Heart right ventricle (tissue), 16 donors: ENCODE measurements at regions of chr3 and their contacts with region 1.

Region 1: DNA sequence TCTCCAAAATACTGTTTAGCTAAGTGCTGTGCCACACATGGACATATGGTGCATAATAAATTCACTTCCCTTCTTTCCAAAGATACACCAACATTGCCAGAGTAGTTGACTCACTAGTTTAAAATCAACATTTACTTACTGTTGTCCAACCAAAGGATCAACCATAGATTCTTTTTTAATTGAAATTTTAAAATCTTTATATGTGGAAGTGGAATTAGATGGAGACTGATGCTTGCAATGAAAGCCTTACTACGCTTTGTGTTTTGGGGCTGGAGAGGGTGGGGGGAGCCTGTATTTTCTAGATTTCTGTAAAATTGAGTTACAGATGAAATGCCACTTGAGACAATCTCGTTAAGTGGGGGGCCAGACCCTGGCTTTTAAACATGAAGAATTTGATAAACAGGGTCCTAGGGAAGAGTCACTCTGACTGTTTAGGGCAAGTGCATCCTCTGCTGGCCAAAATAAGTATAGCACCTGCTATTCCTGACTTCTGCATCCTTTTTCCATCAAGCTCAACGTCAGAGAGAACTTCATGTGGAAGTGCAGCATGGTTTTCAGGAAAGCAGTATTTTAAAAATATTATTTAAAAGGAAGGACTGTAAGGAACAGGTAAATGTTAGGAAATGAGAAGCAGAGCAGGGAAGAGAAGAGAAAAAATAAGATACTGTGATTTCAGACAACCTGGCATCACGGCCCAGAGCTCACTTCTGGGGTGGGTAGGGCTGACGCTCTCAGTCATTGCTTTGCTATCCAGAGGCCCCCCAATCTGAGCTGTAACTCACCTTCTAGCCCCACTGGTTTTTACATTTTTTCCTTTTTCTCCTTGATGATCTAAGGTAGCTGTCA is 76.7 kb downstream of the BOC start:
- DNase-seq: peak in 1 of 2 donors; percentile 70
- ATAC-seq: peak in 7 of 8 donors; percentile 44 to 60 (median 55)
- H3K4me3 ChIP-seq: no peak overlapping the region
- H3K27ac ChIP-seq: peak overlapping the region in 1 of 10 donors; percentile 46
- H3K4me1 ChIP-seq: peaks cover 0 to 6% (median 0%) of the 10 kb centered on the region in 9 donors
- H3K27me3 ChIP-seq: no peaks in the 10 kb centered on the region
- CTCF ChIP-seq: peak; percentile 92 to 100 (median 97)

Region 2: DNA sequence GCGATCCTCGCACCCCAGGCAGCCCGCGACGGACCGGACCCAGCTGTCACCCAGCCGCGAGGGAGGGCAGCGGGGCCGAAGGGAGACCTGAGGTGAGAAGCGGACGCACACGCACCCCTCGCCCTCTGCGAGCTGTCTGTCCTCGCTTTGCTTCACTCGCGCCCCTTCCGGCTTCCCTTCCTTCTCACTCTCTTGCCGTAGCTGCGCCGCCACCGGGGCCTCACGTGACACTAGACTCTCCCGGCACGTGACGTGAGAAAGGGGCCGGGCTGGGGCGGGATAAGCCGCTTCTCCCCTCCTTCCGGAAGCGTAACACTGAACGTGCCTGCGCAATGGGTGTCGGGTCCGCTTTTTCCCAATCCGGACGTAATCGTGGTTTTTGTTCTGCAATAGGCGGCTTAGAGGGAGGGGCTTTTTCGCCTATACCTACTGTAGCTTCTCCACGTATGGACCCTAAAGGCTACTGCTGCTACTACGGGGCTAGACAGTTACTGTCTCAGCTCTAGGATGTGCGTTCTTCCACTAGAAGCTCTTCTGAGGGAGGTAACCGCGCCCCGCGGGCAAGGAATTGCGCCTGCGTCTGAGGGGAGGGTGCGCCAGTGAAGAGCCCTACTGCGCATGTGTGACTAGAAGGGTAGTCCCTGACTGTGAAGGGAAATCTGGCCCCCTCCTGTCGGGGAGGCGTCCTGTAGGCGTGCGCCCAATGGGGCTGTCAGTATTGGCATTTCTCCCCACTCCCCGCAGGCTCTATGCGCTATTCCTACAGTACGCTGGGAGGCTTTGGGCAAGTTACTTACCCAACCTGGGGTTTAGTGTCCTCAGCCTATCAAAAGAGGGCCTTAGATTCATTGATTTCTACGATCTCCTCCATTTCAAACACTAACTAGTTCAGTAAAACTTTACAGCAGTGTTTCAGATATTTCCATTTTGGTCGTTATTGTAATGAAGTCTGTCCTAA is 726.0 kb before region 1 on chr3 and contains the starts of genes ATG3 and SLC35A5:
- intact Hi-C with region 1: loop called in 1 of 10 experiments (anchors 5 kb)
- DNase-seq: peak; percentile 99
- ATAC-seq: peak; percentile 96 to 99 (median 97)
- H3K4me3 ChIP-seq: peak within 1 kb of the TSS; percentile 71 to 99 (median 85)
- H3K27ac ChIP-seq: peak within 1 kb of the TSS; percentile 86 to 99 (median 92)
- H3K4me1 ChIP-seq: peaks cover 2 to 47% (median 40%) of the 10 kb centered on the region in 9 donors
- H3K27me3 ChIP-seq: no peaks in the 10 kb centered on the region
- CTCF ChIP-seq: peak in 3 of 9 donors; percentile 3 to 21 (median 5)
- total RNA-seq, gene ATG3: 38.2 to 52.2 (median 42.8) TPM
- total RNA-seq, gene SLC35A5: 12.0 to 25.7 (median 15.1) TPM

Region 3: DNA sequence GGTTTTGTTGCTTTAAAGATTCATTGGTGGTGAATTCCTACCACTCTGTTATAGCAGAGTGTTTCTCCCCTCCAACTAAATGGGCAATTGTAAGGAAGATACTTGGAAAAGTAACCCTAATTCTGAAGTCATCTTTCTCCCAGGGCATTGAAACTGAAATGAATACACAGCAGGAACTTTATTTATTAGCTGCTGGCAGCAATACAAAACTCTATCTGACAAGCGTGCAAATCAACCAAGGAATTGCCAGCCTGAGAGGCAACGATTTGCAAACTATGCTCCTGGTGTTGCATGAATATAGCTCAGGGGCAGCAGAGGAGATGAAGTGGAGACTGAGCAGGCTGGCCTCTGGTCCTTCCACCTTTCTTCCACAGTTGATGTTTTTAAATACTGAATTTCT is 362.1 kb before region 1 on chr3:
- intact Hi-C with region 1: no loop called
- DNase-seq: no peak
- ATAC-seq: no peak
- H3K4me3 ChIP-seq: no peak overlapping the region
- H3K27ac ChIP-seq: no peak overlapping the region
- H3K4me1 ChIP-seq: no peaks in the 10 kb centered on the region
- H3K27me3 ChIP-seq: no peaks in the 10 kb centered on the region
- CTCF ChIP-seq: no peak

Region 4: DNA sequence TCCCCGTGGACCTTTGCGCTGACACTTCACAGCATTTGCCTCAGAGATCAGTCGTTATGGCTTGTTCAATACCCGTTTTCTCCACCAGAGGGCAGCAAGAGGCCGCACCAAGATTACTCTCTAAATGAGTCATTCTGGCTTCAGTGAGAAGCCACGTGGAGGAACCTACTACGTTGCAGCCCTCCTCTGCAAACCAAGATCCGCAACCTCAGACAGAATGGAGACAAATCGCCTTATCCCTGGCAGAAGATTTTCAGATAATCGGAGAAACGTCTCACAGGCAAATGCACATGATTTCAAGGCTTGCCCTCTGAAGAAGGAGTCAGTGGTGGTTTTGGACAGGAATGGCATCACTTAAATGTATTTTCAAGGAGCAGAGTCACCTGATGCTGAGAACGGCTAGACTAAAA is 236.7 kb before region 1 on chr3:
- intact Hi-C with region 1: loop called (anchors 1 to 5 kb)
- DNase-seq: peak; percentile 60 to 89
- ATAC-seq: peak; percentile 81 to 97 (median 96)
- H3K4me3 ChIP-seq: peak overlapping the region in 1 of 10 donors; percentile 17
- H3K27ac ChIP-seq: no peak overlapping the region
- H3K4me1 ChIP-seq: peaks cover 0 to 32% (median 5%) of the 10 kb centered on the region in 9 donors
- H3K27me3 ChIP-seq: no peaks in the 10 kb centered on the region
- CTCF ChIP-seq: peak; percentile 80 to 98 (median 96)

Region 5: DNA sequence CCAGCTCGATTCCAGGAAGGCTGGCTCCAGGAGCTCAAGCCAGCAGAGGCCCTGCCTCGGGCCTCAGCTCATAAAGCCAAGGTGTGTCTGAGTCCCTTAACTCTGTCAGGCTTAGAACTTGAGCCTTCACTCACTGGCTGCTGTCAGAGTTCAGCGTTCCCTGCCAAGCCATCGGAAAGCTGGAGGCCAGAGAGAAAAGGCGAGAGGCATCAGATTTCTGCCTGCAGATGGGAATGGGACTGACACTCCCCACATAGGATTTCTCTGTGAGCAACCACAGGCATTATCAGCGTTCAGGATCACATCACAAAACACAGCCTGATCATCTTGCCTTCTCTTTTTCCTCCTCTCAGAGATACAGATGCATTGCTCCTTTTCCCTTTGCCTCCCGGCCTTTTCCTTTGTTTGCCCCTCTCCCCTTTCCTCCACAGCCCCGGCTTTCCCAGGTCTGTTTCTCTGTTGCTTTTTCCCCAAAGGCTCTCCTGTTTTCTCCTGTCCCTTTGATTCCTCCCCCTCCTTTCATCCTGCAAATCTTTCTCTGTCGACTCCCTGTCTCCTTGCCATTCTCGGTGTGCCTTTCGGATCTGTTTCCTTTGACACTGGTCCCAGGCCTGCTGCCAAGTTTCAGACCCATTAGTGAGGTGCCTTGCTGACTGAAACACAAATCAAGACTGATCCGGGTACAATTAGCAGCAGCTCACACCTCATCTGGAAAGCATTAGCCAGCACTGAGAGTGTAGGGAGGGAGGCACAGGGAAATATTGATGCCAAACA is 121.1 kb before region 1 on chr3:
- intact Hi-C with region 1: no loop called
- DNase-seq: peak; percentile 31 to 34
- ATAC-seq: peak; percentile 55 to 92 (median 68)
- H3K4me3 ChIP-seq: no peak overlapping the region
- H3K27ac ChIP-seq: peak overlapping the region in 9 of 10 donors; percentile 5 to 73 (median 62)
- H3K4me1 ChIP-seq: peaks cover 0 to 17% (median 14%) of the 10 kb centered on the region in 9 donors
- H3K27me3 ChIP-seq: no peaks in the 10 kb centered on the region
- CTCF ChIP-seq: no peak

Region 6: GRCh38 chr3:113614402-113614801 is 326.4 kb after region 1 on chr3:
- intact Hi-C with region 1: no loop called
- DNase-seq: peak in 1 of 2 donors; percentile 23
- ATAC-seq: peak; percentile 53 to 88 (median 74)
- H3K4me3 ChIP-seq: no peak overlapping the region
- H3K27ac ChIP-seq: peak overlapping the region in 9 of 10 donors; percentile 18 to 78 (median 40)
- H3K4me1 ChIP-seq: peaks cover 0 to 31% (median 20%) of the 10 kb centered on the region in 9 donors
- H3K27me3 ChIP-seq: no peaks in the 10 kb centered on the region
- CTCF ChIP-seq: no peak

Region 7: GRCh38 chr3:113698956-113699355 is 410.9 kb after region 1 on chr3:
- intact Hi-C with region 1: no loop called
- DNase-seq: peak; percentile 10 to 25
- ATAC-seq: no peak
- H3K4me3 ChIP-seq: peak overlapping the region in 9 of 10 donors; percentile 15 to 49 (median 40)
- H3K27ac ChIP-seq: peak overlapping the region in 4 of 10 donors; percentile 25 to 100 (median 100)
- H3K4me1 ChIP-seq: peaks cover 0 to 38% (median 33%) of the 10 kb centered on the region in 9 donors
- H3K27me3 ChIP-seq: no peaks in the 10 kb centered on the region
- CTCF ChIP-seq: no peak